ENCODE measurements at regions of chr17 and their contacts with region 1.

Region 1: DNA sequence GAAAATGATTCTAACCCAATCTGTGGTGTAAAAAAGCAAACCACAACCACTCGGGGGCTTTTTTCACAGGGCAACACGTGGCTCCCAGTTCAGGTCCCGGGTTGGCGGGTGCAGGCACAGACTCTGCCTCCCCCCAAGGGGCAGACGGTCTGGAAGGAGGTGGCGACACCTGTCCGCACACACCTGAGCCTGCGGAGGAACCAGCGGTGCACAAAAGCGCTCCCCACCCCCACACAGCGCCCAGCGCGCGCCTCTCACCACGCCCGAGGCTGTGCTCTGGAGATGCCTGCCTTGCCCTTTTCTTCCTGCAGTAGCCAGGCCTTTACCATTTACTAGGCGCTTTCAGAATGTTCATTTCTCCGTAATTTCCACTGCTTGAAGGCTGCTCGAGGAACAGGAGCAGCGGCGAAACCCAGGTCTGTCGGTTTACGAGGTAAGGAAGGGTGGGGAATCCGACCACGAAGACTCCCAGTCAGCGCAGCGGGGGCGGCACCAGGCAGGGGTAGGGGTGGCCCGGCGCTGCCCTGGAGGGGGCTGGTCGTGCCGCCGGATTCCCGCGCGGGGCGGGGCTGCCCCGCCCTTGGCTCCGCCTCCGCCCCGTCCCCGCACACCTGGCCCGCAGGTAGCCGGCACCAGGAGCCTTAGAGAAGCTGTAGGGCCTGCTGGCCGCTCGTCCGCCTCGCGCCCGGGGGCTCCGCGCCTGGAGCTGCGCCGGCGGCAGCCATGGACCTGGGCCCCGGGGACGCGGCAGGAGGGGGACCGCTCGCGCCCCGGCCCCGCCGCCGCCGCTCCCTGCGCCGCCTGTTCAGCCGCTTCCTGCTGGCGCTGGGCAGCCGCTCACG is at the start of gene USP43:
- DNase-seq: peak; percentile 52
- ATAC-seq: peak; percentile 69
- H3K4me3 Mint-ChIP-seq: peak within 1 kb of the TSS; percentile 70
- H3K27ac Mint-ChIP-seq: peak within 1 kb of the TSS; percentile 57
- H3K4me1 Mint-ChIP-seq: peaks cover 13% of the 10 kb centered on the region
- H3K27me3 Mint-ChIP-seq: peaks cover 44% of the 10 kb centered on the region
- total RNA-seq, gene USP43: 0.25 to 0.33 TPM

Region 2: DNA sequence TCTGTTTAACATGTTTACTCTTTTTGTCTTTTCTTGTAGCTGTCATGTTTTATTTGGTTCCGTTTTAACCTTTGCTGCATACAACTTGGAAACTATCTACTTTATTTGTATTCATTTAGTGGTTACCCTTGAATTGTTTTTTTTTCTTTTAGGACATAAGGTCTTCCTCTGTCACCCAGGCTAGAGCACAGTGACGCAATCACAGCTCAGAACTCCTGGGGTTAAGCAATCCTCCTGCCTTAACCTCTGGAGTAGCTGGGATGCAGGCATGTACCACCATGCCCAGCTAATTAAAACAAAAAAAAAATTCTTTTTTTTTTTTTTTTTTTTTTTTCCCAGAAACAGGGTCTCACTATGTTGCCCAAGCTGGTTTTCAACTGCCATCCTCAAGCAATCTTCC is 29.6 kb before region 1 on chr17:
- CTCF ChIA-PET with region 1: no interaction called
- POLR2A ChIA-PET with region 1: no interaction called
- intact Hi-C with region 1: no loop called
- DNase-seq: no peak
- ATAC-seq: no peak
- H3K4me3 Mint-ChIP-seq: no peak overlapping the region
- H3K27ac Mint-ChIP-seq: no peak overlapping the region
- H3K4me1 Mint-ChIP-seq: no peaks in the 10 kb centered on the region
- H3K27me3 Mint-ChIP-seq: peaks cover 7% of the 10 kb centered on the region

Region 3: DNA sequence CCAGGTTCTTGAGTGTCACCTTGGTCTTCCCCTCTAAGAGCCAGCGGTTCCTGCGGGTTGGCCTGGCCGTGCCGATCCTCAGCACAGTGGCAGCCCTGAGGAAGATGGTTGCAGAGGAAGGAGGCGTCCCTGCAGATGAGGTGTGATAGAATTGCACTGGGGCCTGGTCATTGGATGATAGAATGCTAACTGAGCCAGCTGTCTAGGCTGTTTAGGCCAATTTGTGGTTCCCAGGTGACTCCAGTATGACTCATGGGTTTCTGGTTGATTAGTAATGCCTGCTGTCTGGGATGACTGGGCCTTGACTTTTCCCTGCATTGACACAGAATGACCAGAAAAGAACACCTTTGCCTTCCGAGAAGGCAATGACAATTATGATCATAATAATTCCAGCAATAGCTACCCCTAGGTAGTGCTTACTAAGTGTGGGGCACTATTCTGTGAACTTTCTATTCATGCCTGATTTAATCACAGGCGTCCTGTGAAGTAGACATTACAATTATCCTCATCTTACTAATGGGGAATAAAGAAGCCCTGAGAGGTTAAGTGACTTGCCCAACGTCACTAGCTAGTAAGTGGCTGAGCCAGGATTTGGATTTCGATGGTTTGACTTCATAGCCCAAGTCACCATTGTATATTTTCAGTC is 31.7 kb after region 1 on chr17:
- CTCF ChIA-PET with region 1: interaction called, 4 read pairs
- POLR2A ChIA-PET with region 1: no interaction called
- intact Hi-C with region 1: loop called in 1 of 2 experiments (anchors 2 kb)
- DNase-seq: peak; percentile 44
- ATAC-seq: peak; percentile 93
- H3K4me3 Mint-ChIP-seq: no peak overlapping the region
- H3K27ac Mint-ChIP-seq: no peak overlapping the region
- H3K4me1 Mint-ChIP-seq: peaks cover 5% of the 10 kb centered on the region
- H3K27me3 Mint-ChIP-seq: peaks cover 5% of the 10 kb centered on the region